Esophagus muscularis mucosa (tissue), 4 donors: ENCODE measurements at regions of chr6 and their contacts with region 1.

Region 1: GRCh38 chr6:105409734-105410133 is 6.9 kb upstream of the PREP start:
- DNase-seq: no peak
- H3K4me3 ChIP-seq: no peak overlapping the region
- H3K27ac ChIP-seq: no peak overlapping the region
- H3K4me1 ChIP-seq: no peaks in the 10 kb centered on the region
- H3K27me3 ChIP-seq: peaks cover 0 to 7% (median 0%) of the 10 kb centered on the region in 4 donors
- CTCF ChIP-seq: no peak
- EP300 ChIP-seq: no peak
- POLR2A ChIP-seq: no peak

Region 2: DNA sequence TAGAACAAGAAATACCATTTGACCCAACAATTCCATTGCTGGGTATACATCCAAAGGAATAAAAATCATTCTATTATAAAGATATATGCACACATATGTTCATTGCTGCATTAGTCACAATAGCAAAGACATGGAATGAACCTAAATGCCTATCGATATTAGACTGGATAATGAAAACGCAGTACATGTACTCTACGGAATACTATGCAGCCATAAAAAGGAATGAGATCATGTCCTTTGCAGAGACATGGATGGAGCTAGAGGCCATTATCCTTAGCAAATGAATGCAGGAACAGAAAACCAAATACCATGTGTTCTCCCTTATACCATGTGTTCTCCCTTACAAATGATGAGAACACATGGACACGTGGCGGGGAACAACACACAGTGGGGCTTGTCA is 740.3 kb before region 1 on chr6:
- intact Hi-C with region 1: no loop called
- DNase-seq: no peak
- H3K4me3 ChIP-seq: no peak overlapping the region
- H3K27ac ChIP-seq: no peak overlapping the region
- H3K4me1 ChIP-seq: no peaks in the 10 kb centered on the region
- H3K27me3 ChIP-seq: no peaks in the 10 kb centered on the region
- CTCF ChIP-seq: no peak
- EP300 ChIP-seq: no peak
- POLR2A ChIP-seq: no peak

Region 3: DNA sequence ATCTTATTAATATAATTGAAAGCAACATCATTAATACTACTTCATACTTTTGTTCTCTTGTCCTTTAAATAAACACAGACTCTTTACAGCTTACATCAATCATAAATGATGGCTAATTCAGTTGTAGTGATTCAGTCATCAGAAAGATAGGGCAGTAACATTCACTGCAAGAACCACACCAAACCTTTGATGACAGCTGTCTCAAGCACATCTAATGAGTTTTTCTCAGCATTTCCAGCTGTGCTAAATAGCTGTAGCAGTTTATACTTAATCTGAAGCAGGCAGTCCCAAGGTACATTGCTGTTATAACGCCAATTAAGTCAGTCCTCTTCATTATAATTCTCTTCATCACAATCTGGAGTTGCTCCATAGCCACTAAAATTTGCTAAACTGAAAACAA is 52.6 kb before region 1 on chr6:
- intact Hi-C with region 1: loop called (anchors 2 kb)
- DNase-seq: no peak
- H3K4me3 ChIP-seq: no peak overlapping the region
- H3K27ac ChIP-seq: no peak overlapping the region
- H3K4me1 ChIP-seq: no peaks in the 10 kb centered on the region
- H3K27me3 ChIP-seq: no peaks in the 10 kb centered on the region
- CTCF ChIP-seq: no peak
- EP300 ChIP-seq: no peak
- POLR2A ChIP-seq: no peak